H1 (cell line): ENCODE measurements at regions of chr4 and their contacts with region 1.

Region 1: GRCh38 chr4:2412885-2413716 is 5.3 kb downstream of the ZFYVE28 start:
- DNase-seq: peak; percentile 78 to 86
- H3K4me3 ChIP-seq: peak overlapping the region; percentile 6 to 56 (median 42); a peak in 6 of 8 replicates
- H3K27ac ChIP-seq: peak overlapping the region; percentile 68
- H3K4me1 ChIP-seq: peaks cover 12 to 36% (median 29%) of the 10 kb centered on the region in 4 experiments
- H3K27me3 ChIP-seq: peaks cover 24 to 44% (median 38%) of the 10 kb centered on the region in 4 experiments
- CTCF ChIP-seq: peak in 2 of 3 experiments; percentile 42 to 61; a peak in 3 of 4 replicates
- EP300 ChIP-seq: peak in 1 of 2 experiments; percentile 19; a peak in 1 of 3 replicates
- POLR2A ChIP-seq: peak in 1 of 2 experiments; percentile 82; a peak in 2 of 3 replicates
- RAD21 ChIP-seq: peak in 1 of 2 experiments; percentile 50; a peak in 3 of 4 replicates

Region 2: DNA sequence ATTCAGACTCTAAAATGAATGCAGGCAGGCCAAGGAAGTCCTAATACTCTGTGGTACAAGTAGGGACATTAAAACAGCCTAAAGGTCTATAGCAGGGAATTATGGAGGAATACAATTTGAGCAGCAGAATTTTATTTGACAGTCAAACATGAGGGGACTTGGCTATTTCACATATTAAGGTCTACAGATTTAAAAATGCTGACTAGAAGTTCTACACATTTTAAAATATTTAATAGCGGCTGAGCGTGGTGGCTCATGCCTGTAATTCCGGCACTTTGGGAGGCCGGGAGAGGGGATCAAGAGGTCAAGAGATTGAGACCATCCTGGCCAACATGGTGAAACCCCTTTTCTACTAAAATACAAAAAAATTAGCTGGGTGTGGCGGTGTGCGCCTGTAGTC is 182.0 kb before region 1 on chr4:
- CTCF ChIA-PET with region 1: no interaction called
- POLR2A ChIA-PET with region 1: no interaction called
- DNase-seq: no peak
- H3K4me3 ChIP-seq: no peak overlapping the region
- H3K27ac ChIP-seq: no peak overlapping the region
- H3K4me1 ChIP-seq: no peaks in the 10 kb centered on the region
- H3K27me3 ChIP-seq: no peaks in the 10 kb centered on the region
- CTCF ChIP-seq: no peak
- EP300 ChIP-seq: no peak
- POLR2A ChIP-seq: no peak
- RAD21 ChIP-seq: no peak

Region 3: GRCh38 chr4:2393353-2394270 is 19.5 kb before region 1 on chr4:
- CTCF ChIA-PET with region 1: interaction called, 18 read pairs
- POLR2A ChIA-PET with region 1: interaction called, 8 read pairs
- DNase-seq: peak in 1 of 2 experiments; percentile 80
- H3K4me3 ChIP-seq: peak overlapping the region in 3 of 4 experiments; percentile 15 to 43 (median 29); a peak in 5 of 8 replicates
- H3K27ac ChIP-seq: no peak overlapping the region
- H3K4me1 ChIP-seq: peaks cover 0 to 33% (median 14%) of the 10 kb centered on the region in 4 experiments; a peak in 6 of 7 replicates
- H3K27me3 ChIP-seq: no peaks in the 10 kb centered on the region
- CTCF ChIP-seq: no peak
- EP300 ChIP-seq: no peak
- POLR2A ChIP-seq: no peak
- RAD21 ChIP-seq: no peak

Region 4: DNA sequence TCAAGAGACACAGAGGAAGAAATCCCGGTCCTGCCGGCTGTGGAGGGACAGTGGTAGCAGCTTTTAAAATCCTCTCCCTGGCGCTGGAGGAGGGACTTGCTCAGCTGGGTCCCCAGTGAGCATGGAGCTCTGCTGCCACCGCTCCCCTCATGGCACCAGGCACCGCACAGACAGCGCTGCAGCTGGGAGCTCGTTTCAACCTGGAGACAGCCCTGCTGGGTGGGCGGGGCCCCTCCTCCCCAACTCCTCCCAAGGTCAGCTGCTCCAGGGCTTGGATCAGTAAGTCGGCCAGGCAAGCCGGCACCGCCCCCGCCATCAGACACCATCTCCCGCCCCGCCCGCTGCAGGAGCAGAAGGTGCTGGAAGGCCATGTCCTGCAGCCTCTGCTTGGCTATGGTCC is 11.1 kb before region 1 on chr4:
- CTCF ChIA-PET with region 1: interaction called, 13 read pairs
- POLR2A ChIA-PET with region 1: interaction called, 7 read pairs
- DNase-seq: peak; percentile 74 to 88
- H3K4me3 ChIP-seq: peak overlapping the region in 3 of 4 experiments; percentile 5 to 44 (median 19); a peak in 3 of 8 replicates
- H3K27ac ChIP-seq: no peak overlapping the region
- H3K4me1 ChIP-seq: peaks cover 0 to 23% (median 16%) of the 10 kb centered on the region in 4 experiments; a peak in 6 of 7 replicates
- H3K27me3 ChIP-seq: no peaks in the 10 kb centered on the region; a peak in 1 of 7 replicates
- CTCF ChIP-seq: no peak
- EP300 ChIP-seq: no peak
- POLR2A ChIP-seq: no peak
- RAD21 ChIP-seq: no peak; a peak in 1 of 4 replicates

Region 5: GRCh38 chr4:2428496-2429213 is 15.6 kb after region 1 on chr4:
- CTCF ChIA-PET with region 1: interaction called, 12 read pairs
- POLR2A ChIA-PET with region 1: interaction called, 5 read pairs
- DNase-seq: no peak
- H3K4me3 ChIP-seq: no peak overlapping the region
- H3K27ac ChIP-seq: no peak overlapping the region
- H3K4me1 ChIP-seq: peaks cover 0 to 7% (median under 1%) of the 10 kb centered on the region in 4 experiments; a peak in 5 of 7 replicates
- H3K27me3 ChIP-seq: no peaks in the 10 kb centered on the region
- CTCF ChIP-seq: no peak
- EP300 ChIP-seq: no peak
- POLR2A ChIP-seq: no peak
- RAD21 ChIP-seq: no peak